Endothelial cell of umbilical vein (primary cell): ENCODE measurements at regions of chr7 and their contacts with region 1.

Region 1: DNA sequence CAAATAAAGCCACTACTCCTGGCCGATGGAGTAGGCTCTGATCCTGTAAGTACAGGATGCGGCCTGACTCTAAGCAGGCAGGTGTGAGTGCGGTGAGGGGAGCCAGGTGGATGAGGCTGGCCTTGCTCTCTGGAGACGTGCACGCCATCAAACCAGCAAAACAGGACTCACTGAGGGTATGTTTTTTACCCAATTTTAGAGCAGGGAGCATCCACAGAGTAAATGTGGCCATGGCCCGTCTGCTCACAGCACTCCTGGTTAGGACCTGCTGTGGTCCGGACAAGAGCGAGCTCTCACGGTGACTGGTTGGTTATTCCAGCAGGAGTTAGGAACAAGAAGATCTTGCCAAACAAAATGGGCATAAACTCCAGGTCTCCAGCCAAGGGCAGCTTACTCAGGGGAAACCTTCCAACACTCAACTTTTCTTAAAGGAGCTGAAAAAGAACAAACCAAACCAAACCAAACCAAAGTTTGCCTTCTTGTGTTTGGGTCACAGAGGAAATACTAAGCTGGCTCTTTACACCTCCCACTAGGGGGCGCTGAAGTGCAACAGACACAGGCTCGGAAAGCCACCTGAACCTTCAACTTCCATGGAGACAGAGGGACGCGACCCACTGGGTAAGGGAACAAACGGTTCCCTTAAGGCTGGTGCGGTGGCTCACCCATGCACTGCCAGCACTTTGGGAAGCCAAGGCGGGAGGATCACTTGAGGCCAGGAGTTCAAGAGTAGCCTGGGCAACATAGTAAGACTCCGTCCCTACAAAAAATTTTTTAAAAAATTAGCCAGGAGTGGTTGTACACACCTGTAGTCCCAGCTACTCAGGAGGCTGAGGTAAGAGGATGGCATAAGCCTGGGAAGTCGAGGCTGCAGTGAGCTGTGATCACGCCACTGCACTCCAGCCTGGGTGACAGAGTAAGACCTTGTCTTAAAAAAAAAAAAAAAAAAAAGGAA is 122.4 kb downstream of the CLEC2L start:
- DNase-seq: peak; percentile 79
- H3K4me3 ChIP-seq: no peak overlapping the region
- H3K27ac ChIP-seq: no peak overlapping the region
- H3K4me1 ChIP-seq: peaks cover 29% of the 10 kb centered on the region
- H3K27me3 ChIP-seq: no peaks in the 10 kb centered on the region
- CTCF ChIP-seq: peak; percentile 87 to 89
- POLR2A ChIP-seq: no peak

Region 2: GRCh38 chr7:139635526-139636302 is 10.1 kb before region 1 on chr7:
- CTCF ChIA-PET with region 1: interaction called, 16 read pairs
- POLR2A ChIA-PET with region 1: no interaction called
- dilution Hi-C with region 1: no loop called
- intact Hi-C with region 1: no loop called
- DNase-seq: no peak
- H3K4me3 ChIP-seq: no peak overlapping the region
- H3K27ac ChIP-seq: no peak overlapping the region
- H3K4me1 ChIP-seq: no peaks in the 10 kb centered on the region
- H3K27me3 ChIP-seq: no peaks in the 10 kb centered on the region
- CTCF ChIP-seq: no peak
- POLR2A ChIP-seq: no peak

Region 3: DNA sequence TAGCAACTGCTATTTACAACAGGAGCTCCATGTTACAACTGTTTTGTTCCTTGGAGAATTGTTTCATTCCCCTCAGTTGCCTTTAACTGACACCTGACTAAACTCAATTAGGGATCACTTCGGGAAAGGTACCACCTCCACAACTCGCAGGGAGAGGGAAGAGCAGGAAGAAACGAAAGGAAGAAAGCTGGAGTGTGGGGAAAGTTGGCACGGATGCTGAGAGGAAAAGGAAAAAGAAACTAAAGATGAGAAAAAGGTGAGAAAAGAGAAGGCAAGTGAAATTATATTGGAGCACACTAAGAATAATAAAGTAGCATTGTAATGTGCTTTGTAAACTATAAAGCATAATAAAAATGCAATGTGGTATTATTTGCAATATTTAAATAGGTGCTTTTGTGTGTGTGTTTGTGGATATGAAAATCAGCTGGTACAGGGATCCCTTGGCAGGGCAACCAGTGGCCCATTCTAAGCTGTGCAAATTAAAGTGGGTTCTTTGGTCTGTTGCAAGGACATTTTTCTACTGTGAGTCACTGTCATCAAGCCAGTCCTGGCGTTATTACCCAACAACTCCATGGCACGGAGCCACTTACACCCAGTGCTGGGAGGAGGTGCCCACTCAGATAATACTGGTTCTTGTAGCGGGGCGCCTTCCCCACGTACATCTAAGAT is 86.1 kb after region 1 on chr7:
- CTCF ChIA-PET with region 1: interaction called, 18 read pairs
- POLR2A ChIA-PET with region 1: no interaction called
- dilution Hi-C with region 1: no loop called
- intact Hi-C with region 1: no loop called
- DNase-seq: peak; percentile 81
- H3K4me3 ChIP-seq: peak overlapping the region in 1 of 3 experiments; percentile 50
- H3K27ac ChIP-seq: peak overlapping the region; percentile 87
- H3K4me1 ChIP-seq: peaks cover 53% of the 10 kb centered on the region
- H3K27me3 ChIP-seq: no peaks in the 10 kb centered on the region
- CTCF ChIP-seq: no peak
- POLR2A ChIP-seq: no peak

Region 4: DNA sequence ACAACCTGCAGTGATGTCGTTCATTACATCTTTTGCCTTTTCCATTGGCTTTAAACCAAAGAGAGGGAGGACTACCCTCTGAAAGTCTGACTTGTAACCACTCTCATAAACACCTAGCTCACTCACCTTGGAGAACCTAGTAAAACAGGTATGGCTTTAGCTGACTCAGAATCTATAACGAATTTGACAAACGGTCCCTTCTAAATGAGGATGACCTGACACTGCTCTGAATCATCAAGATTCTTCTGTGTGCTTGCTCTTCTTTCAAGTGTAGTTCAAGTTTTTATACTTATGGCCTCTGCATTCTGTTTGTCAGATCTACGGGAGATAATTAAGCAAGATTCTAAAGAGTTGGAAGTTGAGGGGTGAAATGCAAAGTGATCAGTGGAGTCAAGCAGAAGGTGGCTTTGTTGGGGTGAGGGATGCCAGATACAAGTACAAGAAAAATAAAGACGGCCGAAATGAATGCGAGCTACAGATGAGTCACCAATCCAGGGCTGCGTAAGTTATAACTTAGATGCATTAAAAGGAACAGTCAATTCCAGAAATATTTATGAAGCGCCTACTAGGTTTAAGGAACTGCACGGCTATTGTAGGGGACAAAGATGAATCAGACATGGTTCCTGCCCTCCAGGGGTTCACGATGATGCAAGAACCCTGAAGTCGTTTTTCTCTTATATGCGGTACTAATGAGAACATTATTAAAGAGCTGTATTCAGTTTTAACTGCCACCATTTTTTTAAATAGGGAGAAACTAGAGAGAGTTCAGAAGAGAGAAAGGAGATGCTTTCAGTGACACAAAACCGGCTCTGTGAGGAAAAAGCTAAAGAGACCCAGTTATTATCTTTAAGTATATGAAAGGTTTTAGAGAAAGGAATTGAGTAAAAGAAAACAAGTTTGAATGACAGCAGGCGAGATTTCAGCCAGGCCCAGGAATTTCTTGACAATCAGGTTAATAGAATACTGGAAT is 125.4 kb after region 1 on chr7:
- CTCF ChIA-PET with region 1: interaction called, 47 read pairs
- POLR2A ChIA-PET with region 1: no interaction called
- dilution Hi-C with region 1: no loop called
- intact Hi-C with region 1: loop called (anchors 1 kb)
- DNase-seq: no peak
- H3K4me3 ChIP-seq: no peak overlapping the region
- H3K27ac ChIP-seq: no peak overlapping the region
- H3K4me1 ChIP-seq: peaks cover 31% of the 10 kb centered on the region
- H3K27me3 ChIP-seq: no peaks in the 10 kb centered on the region
- CTCF ChIP-seq: no peak
- POLR2A ChIP-seq: no peak

Region 5: GRCh38 chr7:139825666-139826290 is 179.9 kb after region 1 on chr7:
- CTCF ChIA-PET with region 1: interaction called, 3 read pairs
- POLR2A ChIA-PET with region 1: no interaction called
- dilution Hi-C with region 1: no loop called
- intact Hi-C with region 1: loop called (anchors 2 kb)
- DNase-seq: no peak
- H3K4me3 ChIP-seq: no peak overlapping the region
- H3K27ac ChIP-seq: no peak overlapping the region
- H3K4me1 ChIP-seq: peaks cover 12% of the 10 kb centered on the region
- H3K27me3 ChIP-seq: peaks cover 6 to 19% of the 10 kb centered on the region in 2 experiments
- CTCF ChIP-seq: no peak
- POLR2A ChIP-seq: no peak

Region 6: DNA sequence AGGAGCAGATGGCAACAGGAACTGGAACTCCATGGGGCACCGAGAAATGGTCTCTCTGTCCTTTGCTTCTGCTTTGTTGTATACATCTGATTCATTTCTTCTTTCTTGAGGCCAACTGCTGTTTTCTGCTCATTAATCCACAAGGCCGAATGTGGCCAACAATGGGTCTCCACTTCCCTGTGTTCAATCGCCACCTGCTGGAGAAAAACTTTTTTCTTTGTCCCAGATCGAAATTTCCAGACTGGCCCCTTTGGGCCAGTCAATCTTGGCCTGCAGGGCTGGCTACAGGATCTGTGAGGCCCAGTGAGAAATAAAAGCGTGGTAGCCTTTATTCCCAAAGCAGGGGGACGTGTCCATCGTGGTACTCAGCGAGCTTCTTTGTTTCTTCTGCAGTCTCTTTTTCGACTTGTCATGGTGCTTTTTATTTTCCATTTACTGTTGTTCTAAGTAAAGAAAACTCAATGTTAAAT is 358.1 kb after region 1 on chr7:
- CTCF ChIA-PET with region 1: interaction called, 233 read pairs
- POLR2A ChIA-PET with region 1: no interaction called
- dilution Hi-C with region 1: no loop called
- intact Hi-C with region 1: loop called (anchors 1 kb)
- DNase-seq: peak; percentile 58
- H3K4me3 ChIP-seq: no peak overlapping the region
- H3K27ac ChIP-seq: no peak overlapping the region
- H3K4me1 ChIP-seq: no peaks in the 10 kb centered on the region
- H3K27me3 ChIP-seq: no peaks in the 10 kb centered on the region
- CTCF ChIP-seq: peak; percentile 51 to 60
- POLR2A ChIP-seq: no peak

Region 7: GRCh38 chr7:140062528-140063299 is 416.9 kb after region 1 on chr7 and contains the start of gene PARP12:
- CTCF ChIA-PET with region 1: no interaction called
- POLR2A ChIA-PET with region 1: no interaction called
- dilution Hi-C with region 1: no loop called
- intact Hi-C with region 1: no loop called
- DNase-seq: peak; percentile 85
- H3K4me3 ChIP-seq: peak within 1 kb of the TSS; percentile 53 to 77 (median 71)
- H3K27ac ChIP-seq: peak within 1 kb of the TSS; percentile 84
- H3K4me1 ChIP-seq: peaks cover 36% of the 10 kb centered on the region
- H3K27me3 ChIP-seq: no peaks in the 10 kb centered on the region
- CTCF ChIP-seq: no peak
- POLR2A ChIP-seq: peak; percentile 64
- total RNA-seq, gene PARP12: 52.2 and 65.4 TPM in 2 replicates

Region 8: GRCh38 chr7:140079121-140079536 is 433.3 kb after region 1 on chr7:
- CTCF ChIA-PET with region 1: no interaction called
- POLR2A ChIA-PET with region 1: no interaction called
- dilution Hi-C with region 1: no loop called
- intact Hi-C with region 1: no loop called
- DNase-seq: peak; percentile 22
- H3K4me3 ChIP-seq: no peak overlapping the region
- H3K27ac ChIP-seq: no peak overlapping the region
- H3K4me1 ChIP-seq: no peaks in the 10 kb centered on the region
- H3K27me3 ChIP-seq: peaks cover 0 to 4% of the 10 kb centered on the region in 2 experiments
- CTCF ChIP-seq: peak in 1 of 2 donors; percentile 49
- POLR2A ChIP-seq: no peak